Sciatic nerve (tissue), 2 donors: ENCODE measurements at regions of chr9 and their contacts with region 1.

Region 1: DNA sequence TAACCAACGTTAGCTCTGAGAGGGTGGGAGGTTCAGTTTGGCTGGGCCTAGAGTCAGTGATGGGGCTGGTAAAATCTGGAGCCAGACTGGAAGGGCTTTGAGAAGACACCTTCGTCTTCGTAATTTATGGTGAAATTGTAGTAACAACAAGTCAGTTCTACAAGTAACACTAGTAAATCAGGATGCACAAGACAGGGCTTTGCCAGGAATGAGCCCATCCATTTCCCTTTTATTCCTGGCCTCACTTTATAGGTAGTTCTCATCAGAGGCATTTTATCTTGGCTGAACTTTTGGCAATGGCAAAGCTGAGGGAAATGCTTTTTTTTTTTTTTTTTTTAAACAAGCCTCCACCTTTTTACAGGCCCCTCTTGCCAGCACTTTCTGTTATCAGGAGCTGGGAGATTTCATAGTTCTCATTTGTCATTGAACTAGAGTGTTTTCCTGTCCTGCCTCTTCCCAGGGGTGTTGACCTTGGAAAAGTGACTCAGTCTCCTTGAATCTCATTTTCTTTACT is 110.5 kb upstream of the KLF4 start:
- DNase-seq: no peak
- ATAC-seq: peak; percentile 75

Region 2: GRCh38 chr9:107208121-107208520 is 392.0 kb before region 1 on chr9:
- intact Hi-C with region 1: loop called (anchors 5 kb)
- DNase-seq: no peak
- ATAC-seq: no peak

Region 3: DNA sequence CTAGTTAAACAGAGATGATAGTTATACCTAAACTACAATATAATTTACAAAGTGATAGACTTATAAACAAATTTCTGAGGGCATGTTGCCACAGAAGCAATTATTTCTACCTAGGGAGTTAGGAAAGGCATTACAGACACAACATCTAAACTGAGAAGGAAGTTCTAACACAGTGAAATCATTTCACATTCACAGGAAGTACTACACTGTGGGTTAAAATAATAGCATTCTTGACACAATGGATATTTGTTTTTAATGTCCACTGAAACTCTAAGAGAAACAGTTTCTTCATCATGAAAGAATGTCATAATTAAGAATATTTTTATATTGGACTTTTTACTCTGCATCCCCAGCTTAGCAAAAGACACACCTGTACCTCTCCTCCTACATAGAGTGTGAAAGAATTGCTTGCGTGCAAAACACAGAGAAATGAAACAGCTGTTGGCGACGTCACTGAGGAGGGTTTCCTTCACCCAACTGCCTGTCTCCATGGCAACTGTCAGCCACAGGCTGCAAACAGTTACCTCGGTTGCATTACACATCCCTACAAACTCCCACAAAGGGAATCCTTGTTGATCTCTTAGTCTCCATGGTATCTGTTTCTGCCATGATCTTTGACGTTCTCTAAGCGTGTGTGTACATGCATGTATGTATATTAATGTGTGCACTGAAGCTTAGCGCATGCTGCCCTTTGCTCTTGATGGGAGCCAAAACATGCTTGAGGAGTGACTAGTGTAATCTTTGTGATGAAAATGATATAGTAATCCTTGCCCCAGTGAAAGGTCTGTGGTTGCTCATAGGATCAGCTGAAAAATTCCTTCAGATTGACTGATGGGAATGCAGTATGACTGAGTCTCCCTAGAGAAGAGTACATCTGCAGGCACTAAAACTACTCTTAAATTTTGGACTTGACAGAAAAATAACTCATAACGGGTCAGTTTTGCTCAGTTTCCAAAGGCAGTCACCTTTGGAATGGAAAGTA is 1087.2 kb after region 1 on chr9:
- intact Hi-C with region 1: no loop called
- DNase-seq: no peak
- ATAC-seq: no peak